ENCODE measurements at regions of chr9 and their contacts with region 1.

Region 1: DNA sequence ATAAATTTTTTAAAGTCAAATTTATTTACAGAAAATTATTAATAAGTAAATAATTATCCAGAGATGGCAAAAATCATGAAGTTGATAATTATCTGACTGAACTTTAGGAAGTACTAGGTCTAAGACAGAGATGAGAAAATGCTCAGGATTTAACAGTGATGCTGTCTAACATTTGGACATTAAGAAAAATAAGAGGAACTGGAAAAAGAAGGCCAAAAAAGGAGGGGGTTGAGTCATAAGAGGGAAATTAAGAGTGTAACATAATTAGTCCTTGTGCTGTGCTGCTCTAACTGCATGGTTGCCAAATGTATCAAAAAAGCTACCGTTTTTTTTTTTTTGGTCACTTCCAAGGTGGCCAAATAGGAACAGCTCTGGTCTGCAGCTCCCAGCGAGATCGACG is 35.4 kb upstream of the TUT7 start:
- DNase-seq: no peak
- ATAC-seq: no peak
- H3K4me3 ChIP-seq: no peak overlapping the region
- H3K27ac ChIP-seq: no peak overlapping the region
- H3K4me1 ChIP-seq: no peaks in the 10 kb centered on the region
- H3K27me3 ChIP-seq: no peaks in the 10 kb centered on the region; the same call in 1 of the 2 replicates
- CTCF ChIP-seq: no peak
- POLR2A ChIP-seq: no peak
- RAD21 ChIP-seq: no peak

Region 2: DNA sequence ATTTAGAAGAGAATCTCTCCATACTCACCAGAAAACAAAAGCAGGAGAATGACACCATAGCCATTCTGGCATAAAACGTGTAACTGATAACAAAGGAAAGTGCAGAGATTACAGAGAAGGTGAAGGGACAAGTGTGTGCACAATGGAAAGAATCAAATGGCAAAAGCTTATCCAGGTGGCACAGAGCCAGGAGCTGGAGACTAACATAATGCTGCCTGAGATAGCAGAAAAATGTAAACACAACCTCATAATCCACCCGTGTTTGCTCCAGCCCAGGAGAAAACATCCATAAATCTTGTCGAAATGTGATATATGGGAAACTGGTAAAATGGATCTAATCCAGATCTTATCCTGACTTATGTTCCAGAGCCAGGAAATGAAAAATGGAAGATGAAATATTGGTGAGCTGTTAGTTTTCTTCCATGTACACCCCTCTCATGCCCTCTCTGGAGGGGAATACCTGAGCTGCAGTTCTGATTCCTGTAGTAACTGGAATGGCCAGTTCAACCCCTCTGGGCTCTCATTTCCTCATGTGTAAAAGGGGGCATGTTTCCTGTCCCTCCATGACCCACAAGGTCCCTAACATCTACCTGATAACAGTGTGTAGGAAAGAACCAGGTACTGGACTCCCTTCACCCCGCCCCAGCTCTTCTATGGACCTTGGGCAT is 895.7 kb after region 1 on chr9:
- CTCF ChIA-PET with region 1: no interaction called
- POLR2A ChIA-PET with region 1: interaction called, 10 read pairs
- RAD21 ChIA-PET with region 1: no interaction called
- intact Hi-C with region 1: no loop called
- DNase-seq: no peak
- ATAC-seq: no peak
- H3K4me3 ChIP-seq: no peak overlapping the region
- H3K27ac ChIP-seq: no peak overlapping the region
- H3K4me1 ChIP-seq: no peaks in the 10 kb centered on the region
- H3K27me3 ChIP-seq: peaks cover 21% of the 10 kb centered on the region
- CTCF ChIP-seq: no peak
- POLR2A ChIP-seq: no peak
- RAD21 ChIP-seq: no peak

Measured in HCT116 (cell line).